ENCODE measurements at regions of chr2 and their contacts with region 1.

Region 1: DNA sequence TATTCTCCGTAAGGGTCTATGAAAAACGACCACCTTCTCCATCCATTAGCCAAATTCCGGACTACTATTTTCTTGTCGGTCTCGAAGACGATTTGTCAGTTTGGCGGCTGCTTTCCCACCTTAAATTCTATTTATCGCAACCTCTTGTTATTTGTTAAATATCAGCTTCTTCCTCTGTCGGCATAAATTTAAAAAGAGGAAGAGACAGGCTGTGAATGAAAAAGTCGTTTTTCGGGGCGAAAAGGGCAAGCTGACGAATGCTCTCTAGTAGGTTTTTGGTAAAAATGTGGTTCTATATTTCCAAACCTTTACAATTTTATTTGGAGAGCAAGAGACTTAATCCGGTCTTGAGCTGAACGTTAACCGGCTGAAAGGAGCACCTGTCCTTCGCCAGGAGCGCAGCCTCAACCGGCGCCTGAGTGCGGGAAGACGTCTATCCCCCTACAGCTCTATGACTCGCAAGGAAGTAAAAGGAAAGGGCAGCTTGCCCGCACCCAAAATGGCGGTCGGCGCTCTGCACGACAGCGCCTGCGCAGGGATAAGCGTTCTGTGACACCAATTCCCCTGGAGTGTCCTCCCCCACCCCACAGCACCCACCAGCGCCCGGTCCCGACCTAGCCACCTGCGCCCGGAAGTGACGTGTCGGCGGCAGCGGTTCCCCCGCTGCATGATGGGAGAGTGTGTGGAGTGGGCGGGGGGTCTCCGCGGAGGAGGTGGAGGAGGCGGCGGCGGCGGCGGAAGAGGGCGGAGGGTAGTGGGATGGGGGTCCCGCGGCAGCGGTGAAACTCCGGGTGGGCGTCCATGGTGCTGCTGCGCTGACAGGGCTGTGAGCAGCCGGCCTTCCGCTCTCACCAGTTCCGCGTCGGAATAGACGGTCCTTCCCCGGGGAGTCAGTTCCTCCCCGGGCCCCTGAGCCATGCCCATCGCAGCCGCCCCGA is at the start of gene AFTPH:
- DNase-seq: peak; percentile 100
- ATAC-seq: peak; percentile 92
- H3K4me3 Mint-ChIP-seq: peak within 1 kb of the TSS; percentile 91
- H3K27ac Mint-ChIP-seq: peak within 1 kb of the TSS; percentile 99
- H3K4me1 Mint-ChIP-seq: peaks cover 38% of the 10 kb centered on the region
- H3K27me3 Mint-ChIP-seq: peaks cover 3% of the 10 kb centered on the region
- total RNA-seq, gene AFTPH: 32.9 to 43.5 TPM

Region 2: GRCh38 chr2:64052468-64053241 is 471.3 kb before region 1 on chr2:
- CTCF ChIA-PET with region 1: interaction called, 14 read pairs
- DNase-seq: no peak
- ATAC-seq: no peak
- H3K4me3 Mint-ChIP-seq: no peak overlapping the region
- H3K27ac Mint-ChIP-seq: no peak overlapping the region
- H3K4me1 Mint-ChIP-seq: peaks cover 43% of the 10 kb centered on the region
- H3K27me3 Mint-ChIP-seq: peaks cover 3% of the 10 kb centered on the region

Region 3: DNA sequence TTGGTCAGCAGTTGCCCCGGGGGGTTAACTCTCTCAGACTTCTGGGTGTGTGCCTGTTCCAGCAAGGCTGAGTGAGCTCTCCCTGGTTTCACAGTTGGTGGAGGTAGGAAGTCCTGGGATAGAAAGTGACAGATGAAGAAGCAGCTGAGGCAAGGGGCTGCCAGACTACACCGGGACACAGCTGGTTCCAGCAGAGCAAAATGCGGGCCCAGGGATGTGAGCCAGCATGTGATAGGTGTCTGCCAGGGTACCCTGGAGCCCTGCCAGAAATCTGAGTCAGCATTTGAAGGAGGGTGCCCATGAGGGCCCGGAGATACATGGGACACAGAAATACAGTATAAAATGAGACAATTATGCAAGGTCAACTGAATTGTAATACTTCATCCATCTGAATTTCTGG is 149.2 kb before region 1 on chr2:
- CTCF ChIA-PET with region 1: no interaction called
- DNase-seq: peak; percentile 37
- ATAC-seq: no peak
- H3K4me3 Mint-ChIP-seq: no peak overlapping the region
- H3K27ac Mint-ChIP-seq: no peak overlapping the region
- H3K4me1 Mint-ChIP-seq: no peaks in the 10 kb centered on the region
- H3K27me3 Mint-ChIP-seq: peaks cover 6% of the 10 kb centered on the region

Region 4: DNA sequence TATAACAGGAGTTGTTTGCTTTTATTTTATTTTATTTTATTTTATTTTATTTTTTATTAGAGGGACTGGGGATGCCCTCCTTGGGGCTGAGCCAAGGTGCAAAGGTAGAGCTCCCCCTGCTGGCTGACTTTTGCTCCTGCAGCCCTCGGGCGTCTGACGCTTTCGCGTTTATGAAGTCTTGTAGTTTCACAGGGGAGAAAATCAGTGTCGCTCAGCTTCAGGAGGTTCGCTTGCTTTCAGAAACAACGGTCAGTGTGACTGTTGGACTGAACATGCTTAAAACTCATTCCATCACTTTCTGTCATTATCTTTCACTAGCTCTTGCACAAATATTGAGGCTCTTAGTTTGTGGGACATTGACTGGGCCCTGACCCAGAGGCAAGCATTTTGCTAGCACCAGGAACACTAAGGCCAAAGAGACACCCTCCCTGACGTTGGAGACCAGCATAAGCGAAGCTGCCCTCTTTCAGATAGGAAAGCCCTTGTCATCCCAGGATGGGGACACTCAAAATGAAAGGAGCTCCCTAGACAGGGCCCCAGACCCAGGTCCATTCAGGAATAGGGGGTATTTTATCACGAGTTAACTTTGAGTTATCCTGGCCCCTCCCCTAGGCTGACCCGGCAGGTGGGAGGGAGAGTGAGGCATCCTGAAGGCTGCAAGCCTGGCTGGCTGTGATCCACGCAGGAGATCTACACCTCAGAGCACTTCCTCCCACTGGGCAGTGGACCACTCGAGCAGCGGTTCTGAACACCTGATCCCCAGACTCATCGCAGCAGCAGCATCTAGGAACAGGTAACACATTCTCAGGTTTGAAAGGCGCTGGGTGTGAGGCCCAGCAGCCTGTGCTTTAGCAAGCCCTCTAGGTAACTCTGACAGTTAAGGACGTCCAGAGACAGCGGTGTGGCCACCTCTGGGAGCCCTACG is 35.6 kb before region 1 on chr2:
- CTCF ChIA-PET with region 1: interaction called, 10 read pairs
- DNase-seq: peak; percentile 84
- ATAC-seq: peak; percentile 87
- H3K4me3 Mint-ChIP-seq: no peak overlapping the region
- H3K27ac Mint-ChIP-seq: no peak overlapping the region
- H3K4me1 Mint-ChIP-seq: peaks cover 21% of the 10 kb centered on the region
- H3K27me3 Mint-ChIP-seq: peaks cover 30% of the 10 kb centered on the region

Region 5: DNA sequence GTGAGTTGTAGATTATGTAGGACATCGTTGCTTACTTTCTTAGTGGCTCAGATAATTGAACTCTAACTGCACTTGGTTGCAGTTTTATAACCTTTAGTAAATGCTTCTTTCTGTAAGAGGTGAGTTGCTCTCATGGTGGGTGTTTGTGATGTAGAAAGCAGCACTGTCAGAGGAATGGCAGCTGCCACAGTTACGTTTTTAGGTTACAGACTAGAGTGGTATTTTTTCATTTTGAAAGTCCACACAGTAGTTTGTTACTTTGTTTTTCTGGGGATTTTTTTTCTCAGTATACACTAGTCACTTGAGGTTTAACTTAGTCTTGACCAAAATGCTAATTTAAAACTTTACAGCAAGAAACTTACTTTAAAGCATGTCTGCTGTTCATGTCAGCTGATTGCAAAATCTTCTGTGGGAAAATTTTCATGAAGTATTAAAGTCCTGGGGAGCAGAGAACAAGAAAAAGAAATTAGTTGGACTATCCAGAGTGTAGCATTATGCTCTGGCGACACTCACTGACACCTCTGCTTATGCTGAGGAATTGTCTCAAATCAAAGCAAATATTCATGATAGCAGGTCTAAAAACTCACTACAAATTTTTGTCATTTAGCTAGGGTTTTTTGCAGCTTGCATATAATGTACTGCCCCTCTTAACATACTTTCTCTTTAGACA is 15.0 kb after region 1 on chr2:
- CTCF ChIA-PET with region 1: interaction called, 29 read pairs
- DNase-seq: no peak
- ATAC-seq: peak; percentile 44
- H3K4me3 Mint-ChIP-seq: no peak overlapping the region
- H3K27ac Mint-ChIP-seq: peak overlapping the region; percentile 63
- H3K4me1 Mint-ChIP-seq: peaks cover 60% of the 10 kb centered on the region
- H3K27me3 Mint-ChIP-seq: no peaks in the 10 kb centered on the region

Region 6: GRCh38 chr2:64586883-64587481 is 63.0 kb after region 1 on chr2:
- CTCF ChIA-PET with region 1: interaction called, 15 read pairs
- DNase-seq: no peak
- ATAC-seq: peak; percentile 65
- H3K4me3 Mint-ChIP-seq: no peak overlapping the region
- H3K27ac Mint-ChIP-seq: no peak overlapping the region
- H3K4me1 Mint-ChIP-seq: peaks cover 6% of the 10 kb centered on the region
- H3K27me3 Mint-ChIP-seq: no peaks in the 10 kb centered on the region

Region 7: GRCh38 chr2:64644177-64645004 is 120.5 kb after region 1 on chr2:
- CTCF ChIA-PET with region 1: interaction called, 19 read pairs
- DNase-seq: peak; percentile 83
- ATAC-seq: peak; percentile 84
- H3K4me3 Mint-ChIP-seq: peak overlapping the region; percentile 85
- H3K27ac Mint-ChIP-seq: peak overlapping the region; percentile 93
- H3K4me1 Mint-ChIP-seq: peaks cover 77% of the 10 kb centered on the region
- H3K27me3 Mint-ChIP-seq: no peaks in the 10 kb centered on the region

Region 8: DNA sequence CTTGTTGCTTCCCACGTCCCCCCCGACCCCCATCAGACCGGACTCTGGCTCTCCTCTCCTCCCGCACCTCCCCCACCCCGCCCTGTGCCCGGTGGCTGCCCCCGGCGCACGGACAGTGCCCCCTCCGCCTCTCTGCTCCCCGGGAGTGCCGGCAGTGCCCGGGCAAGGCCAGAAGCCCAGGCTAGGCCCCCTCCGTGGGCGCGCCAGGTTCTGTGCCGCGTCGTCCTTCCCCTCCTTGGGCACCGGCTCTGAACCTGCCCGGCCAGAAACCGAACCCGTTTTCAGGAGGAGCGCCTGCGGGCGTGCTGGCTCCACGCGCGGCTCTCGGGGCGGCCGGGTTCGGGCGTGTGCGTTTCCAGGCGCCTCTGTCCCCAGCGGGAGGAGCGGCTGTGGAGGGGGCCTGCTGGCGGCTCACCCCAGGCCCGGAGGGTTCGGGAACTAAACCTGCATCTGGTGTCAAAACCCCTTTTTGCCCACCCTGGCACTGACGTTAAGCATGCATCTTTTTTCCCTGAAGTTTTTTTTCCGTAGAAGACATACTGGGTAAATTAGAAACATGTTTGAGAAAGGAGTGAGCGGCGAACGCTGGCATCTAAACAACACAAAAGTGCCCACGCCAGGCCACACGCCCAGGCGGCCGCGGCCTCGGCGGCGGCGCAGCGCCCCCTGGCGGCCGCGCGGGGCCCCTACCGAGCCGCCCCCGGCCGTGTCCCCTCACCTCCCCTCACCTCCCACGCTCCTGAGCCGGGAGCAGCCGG is 341.3 kb after region 1 on chr2:
- CTCF ChIA-PET with region 1: interaction called, 17 read pairs
- DNase-seq: peak; percentile 69
- ATAC-seq: peak; percentile 95
- H3K4me3 Mint-ChIP-seq: peak overlapping the region; percentile 66
- H3K27ac Mint-ChIP-seq: no peak overlapping the region
- H3K4me1 Mint-ChIP-seq: no peaks in the 10 kb centered on the region
- H3K27me3 Mint-ChIP-seq: peaks cover 9% of the 10 kb centered on the region

Measured in activated CD8-positive, alpha-beta memory T cell treated with anti-CD3 and anti-CD28 coated beads, Interleukin-2, amount 10 ng/mL, durations not matched to agents 7 days and 5 days (primary cell).